Endothelial cell of umbilical vein (primary cell): ENCODE measurements at regions of chr12 and their contacts with region 1.

Region 1: GRCh38 chr12:49130151-49131050 is 794 bp downstream of the TUBA1B start:
- DNase-seq: peak; percentile 95
- H3K4me3 ChIP-seq: peak overlapping the region; percentile 69 to 99 (median 73)
- H3K27ac ChIP-seq: peak overlapping the region; percentile 65
- H3K4me1 ChIP-seq: peaks cover 22% of the 10 kb centered on the region
- H3K27me3 ChIP-seq: no peaks in the 10 kb centered on the region
- CTCF ChIP-seq: peak; percentile 98 to 99
- POLR2A ChIP-seq: peak; percentile 86

Region 2: GRCh38 chr12:49069507-49070346 is 60.7 kb before region 1 on chr12 and contains the start of gene RHEBL1:
- CTCF ChIA-PET with region 1: interaction called, 197 read pairs
- POLR2A ChIA-PET with region 1: interaction called, 13 read pairs
- dilution Hi-C with region 1: no loop called
- intact Hi-C with region 1: loop called (anchors 1 kb)
- DNase-seq: peak; percentile 98
- H3K4me3 ChIP-seq: peak within 1 kb of the TSS; percentile 61 to 81 (median 64)
- H3K27ac ChIP-seq: peak within 1 kb of the TSS; percentile 30
- H3K4me1 ChIP-seq: peaks cover 12% of the 10 kb centered on the region
- H3K27me3 ChIP-seq: no peaks in the 10 kb centered on the region
- CTCF ChIP-seq: peak in 1 of 2 donors; percentile 13
- POLR2A ChIP-seq: peak; percentile 70
- total RNA-seq, gene RHEBL1: 2.3 and 2.6 TPM in 2 replicates

Region 3: GRCh38 chr12:49098035-49098451 is 32.4 kb before region 1 on chr12:
- CTCF ChIA-PET with region 1: interaction called, 10 read pairs
- POLR2A ChIA-PET with region 1: interaction called, 25 read pairs
- dilution Hi-C with region 1: no loop called
- intact Hi-C with region 1: no loop called
- DNase-seq: peak; percentile 58
- H3K4me3 ChIP-seq: no peak overlapping the region
- H3K27ac ChIP-seq: no peak overlapping the region
- H3K4me1 ChIP-seq: peaks cover 19% of the 10 kb centered on the region
- H3K27me3 ChIP-seq: no peaks in the 10 kb centered on the region
- CTCF ChIP-seq: peak; percentile 81 to 91
- POLR2A ChIP-seq: no peak

Region 4: DNA sequence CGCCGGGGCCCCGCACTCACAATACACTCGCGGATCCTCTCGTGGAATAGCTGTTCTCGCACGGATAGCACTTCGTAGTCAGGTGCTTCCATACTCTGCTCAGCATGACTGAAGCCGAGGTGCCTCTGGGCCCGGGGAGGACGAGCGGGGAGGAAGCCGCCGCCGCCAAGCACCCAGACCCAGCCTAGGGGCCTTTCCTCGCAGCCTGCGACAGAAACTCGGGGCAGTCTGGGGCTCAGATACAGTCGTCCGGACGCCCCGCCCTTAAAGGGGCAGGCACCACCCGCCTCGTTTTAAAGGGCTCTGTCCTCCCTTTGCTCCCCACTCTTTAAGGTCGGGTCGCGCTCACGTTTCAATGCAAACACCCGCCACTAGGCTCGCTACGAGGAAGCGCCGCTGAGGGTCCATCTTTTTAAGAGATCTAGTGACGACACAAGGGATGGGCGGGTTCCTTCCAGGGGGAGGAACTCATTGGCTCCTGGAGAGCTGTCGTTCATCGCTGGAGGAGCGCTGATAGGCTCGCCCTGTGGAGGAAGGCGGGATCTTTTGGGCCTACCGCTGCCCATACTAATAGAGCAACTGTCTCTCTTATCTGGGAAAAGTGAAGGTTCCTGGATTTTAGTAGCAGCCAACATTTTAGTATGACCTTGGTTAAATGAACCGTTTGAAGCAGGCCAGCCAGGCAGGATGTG is 19.8 kb before region 1 on chr12 and contains the start of gene LMBR1L:
- CTCF ChIA-PET with region 1: interaction called, 27 read pairs
- POLR2A ChIA-PET with region 1: interaction called, 27 read pairs
- dilution Hi-C with region 1: no loop called
- intact Hi-C with region 1: loop called (anchors 2 kb)
- DNase-seq: peak; percentile 98
- H3K4me3 ChIP-seq: peak within 1 kb of the TSS; percentile 36 to 92 (median 68)
- H3K27ac ChIP-seq: peak within 1 kb of the TSS; percentile 36
- H3K4me1 ChIP-seq: peaks cover 20% of the 10 kb centered on the region
- H3K27me3 ChIP-seq: no peaks in the 10 kb centered on the region
- CTCF ChIP-seq: peak in 1 of 2 donors; percentile 43
- POLR2A ChIP-seq: peak; percentile 74
- total RNA-seq, gene LMBR1L: 92.8 and 106 TPM in 2 replicates

Region 5: GRCh38 chr12:49225556-49226181 is 95.3 kb after region 1 on chr12:
- CTCF ChIA-PET with region 1: interaction called, 57 read pairs
- POLR2A ChIA-PET with region 1: interaction called, 16 read pairs
- dilution Hi-C with region 1: no loop called
- intact Hi-C with region 1: loop called (anchors 2 kb)
- DNase-seq: peak; percentile 56
- H3K4me3 ChIP-seq: no peak overlapping the region
- H3K27ac ChIP-seq: no peak overlapping the region
- H3K4me1 ChIP-seq: peaks cover 5% of the 10 kb centered on the region
- H3K27me3 ChIP-seq: no peaks in the 10 kb centered on the region
- CTCF ChIP-seq: peak; percentile 17 to 28
- POLR2A ChIP-seq: no peak

Region 6: GRCh38 chr12:49264738-49265515 is 134.5 kb after region 1 on chr12 and contains the start of gene TUBA1C:
- CTCF ChIA-PET with region 1: interaction called, 5 read pairs
- POLR2A ChIA-PET with region 1: interaction called, 9 read pairs
- dilution Hi-C with region 1: no loop called
- intact Hi-C with region 1: loop called (anchors 1 kb)
- DNase-seq: peak; percentile 89
- H3K4me3 ChIP-seq: peak within 1 kb of the TSS; percentile 68 to 95 (median 83)
- H3K27ac ChIP-seq: peak within 1 kb of the TSS; percentile 83
- H3K4me1 ChIP-seq: peaks cover 46% of the 10 kb centered on the region
- H3K27me3 ChIP-seq: no peaks in the 10 kb centered on the region
- CTCF ChIP-seq: no peak
- POLR2A ChIP-seq: peak; percentile 99
- total RNA-seq, gene TUBA1C: 515 and 523 TPM in 2 replicates

Region 7: GRCh38 chr12:49288412-49288853 is 158.0 kb after region 1 on chr12:
- CTCF ChIA-PET with region 1: no interaction called
- POLR2A ChIA-PET with region 1: no interaction called
- dilution Hi-C with region 1: no loop called
- intact Hi-C with region 1: no loop called
- DNase-seq: peak; percentile 57
- H3K4me3 ChIP-seq: no peak overlapping the region
- H3K27ac ChIP-seq: no peak overlapping the region
- H3K4me1 ChIP-seq: peaks cover 2% of the 10 kb centered on the region
- H3K27me3 ChIP-seq: peaks cover 4 to 9% of the 10 kb centered on the region in 2 experiments
- CTCF ChIP-seq: peak; percentile 75 to 80
- POLR2A ChIP-seq: no peak